Endothelial cell of umbilical vein (primary cell): ENCODE measurements at regions of chr6 and their contacts with region 1.

Region 1: GRCh38 chr6:152267967-152268845 is 369.0 kb downstream of the SYNE1 start:
- DNase-seq: peak; percentile 52
- H3K4me3 ChIP-seq: no peak overlapping the region
- H3K27ac ChIP-seq: no peak overlapping the region
- H3K4me1 ChIP-seq: no peaks in the 10 kb centered on the region
- H3K27me3 ChIP-seq: no peaks in the 10 kb centered on the region
- CTCF ChIP-seq: peak; percentile 25 to 26
- POLR2A ChIP-seq: no peak

Region 2: DNA sequence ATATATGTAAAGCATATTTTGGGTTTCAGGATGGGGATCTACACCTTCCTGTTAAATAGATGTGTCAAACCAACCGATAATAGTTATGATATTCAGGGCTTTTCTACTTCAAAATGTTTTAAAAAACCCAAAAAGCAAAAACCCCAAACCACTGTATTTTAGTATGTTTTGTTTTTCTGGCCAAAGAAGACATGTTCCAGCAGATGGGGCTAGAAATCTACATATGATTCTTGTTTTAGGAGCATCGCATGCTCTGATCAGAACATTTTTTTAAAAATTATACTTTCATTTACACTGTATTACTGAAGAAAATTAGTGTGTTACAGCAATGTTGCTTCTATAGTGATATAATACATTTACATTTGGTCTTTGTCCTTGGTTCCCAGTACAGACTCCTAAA is 827.3 kb before region 1 on chr6:
- CTCF ChIA-PET with region 1: interaction called, 11 read pairs
- POLR2A ChIA-PET with region 1: no interaction called
- dilution Hi-C with region 1: no loop called
- intact Hi-C with region 1: no loop called
- DNase-seq: peak; percentile 30
- H3K4me3 ChIP-seq: no peak overlapping the region
- H3K27ac ChIP-seq: no peak overlapping the region
- H3K4me1 ChIP-seq: peaks cover 18% of the 10 kb centered on the region
- H3K27me3 ChIP-seq: no peaks in the 10 kb centered on the region
- CTCF ChIP-seq: peak in 1 of 2 donors; percentile 5
- POLR2A ChIP-seq: no peak

Region 3: DNA sequence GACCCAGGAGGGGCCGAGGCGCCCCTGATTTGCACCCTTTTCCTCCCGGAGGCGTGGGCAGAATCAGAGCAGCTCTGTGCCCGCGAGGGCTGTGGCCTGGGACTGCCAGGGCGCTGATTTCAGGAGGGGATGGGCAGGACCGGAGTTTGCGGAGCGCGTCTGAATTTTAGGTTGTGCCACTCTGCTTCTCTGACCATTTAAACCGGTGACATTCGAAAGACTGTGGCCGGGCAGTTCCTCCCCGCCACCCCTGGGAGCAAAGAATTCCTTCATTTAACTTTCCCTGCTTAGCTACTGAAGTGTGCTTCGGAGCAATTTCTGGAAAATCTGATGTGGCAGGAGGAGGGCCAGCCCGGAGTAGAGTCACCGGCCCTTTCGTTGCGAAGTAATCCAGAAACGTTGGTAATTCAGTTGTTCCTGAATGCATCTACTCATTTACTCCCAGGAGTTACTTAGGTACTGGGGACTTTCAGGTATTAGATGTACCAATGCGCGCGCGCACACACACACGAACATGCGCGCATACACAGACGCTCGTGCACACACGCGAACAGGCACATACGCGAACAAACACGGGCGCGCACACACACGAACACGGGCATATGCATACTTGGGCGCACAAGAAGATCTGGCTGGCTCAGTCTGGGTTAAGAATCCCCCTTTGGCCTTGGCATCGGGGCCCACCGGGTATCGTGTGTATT is 773.8 kb before region 1 on chr6:
- CTCF ChIA-PET with region 1: no interaction called
- POLR2A ChIA-PET with region 1: no interaction called
- dilution Hi-C with region 1: no loop called
- intact Hi-C with region 1: loop called (anchors 5 kb)
- DNase-seq: peak; percentile 70
- H3K4me3 ChIP-seq: peak overlapping the region; percentile 51 to 82 (median 64)
- H3K27ac ChIP-seq: peak overlapping the region; percentile 14
- H3K4me1 ChIP-seq: peaks cover 12% of the 10 kb centered on the region
- H3K27me3 ChIP-seq: no peaks in the 10 kb centered on the region
- CTCF ChIP-seq: no peak
- POLR2A ChIP-seq: no peak

Region 4: GRCh38 chr6:151661928-151662327 is 606.3 kb before region 1 on chr6:
- CTCF ChIA-PET with region 1: interaction called, 16 read pairs
- POLR2A ChIA-PET with region 1: no interaction called
- dilution Hi-C with region 1: no loop called
- intact Hi-C with region 1: loop called (anchors 5 kb)
- DNase-seq: peak; percentile 9
- H3K4me3 ChIP-seq: no peak overlapping the region
- H3K27ac ChIP-seq: no peak overlapping the region
- H3K4me1 ChIP-seq: no peaks in the 10 kb centered on the region
- H3K27me3 ChIP-seq: peaks cover 7 to 21% of the 10 kb centered on the region in 2 experiments
- CTCF ChIP-seq: peak; percentile 23 to 52
- POLR2A ChIP-seq: no peak

Region 5: GRCh38 chr6:152124429-152125074 is 143.7 kb before region 1 on chr6:
- CTCF ChIA-PET with region 1: interaction called, 10 read pairs
- POLR2A ChIA-PET with region 1: no interaction called
- dilution Hi-C with region 1: no loop called
- intact Hi-C with region 1: loop called (anchors 5 kb)
- DNase-seq: peak; percentile 81
- H3K4me3 ChIP-seq: no peak overlapping the region
- H3K27ac ChIP-seq: no peak overlapping the region
- H3K4me1 ChIP-seq: peaks cover 1% of the 10 kb centered on the region
- H3K27me3 ChIP-seq: no peaks in the 10 kb centered on the region
- CTCF ChIP-seq: peak; percentile 53 to 55
- POLR2A ChIP-seq: no peak

Region 6: GRCh38 chr6:152356451-152357061 is 88.3 kb after region 1 on chr6:
- CTCF ChIA-PET with region 1: interaction called, 12 read pairs
- POLR2A ChIA-PET with region 1: no interaction called
- dilution Hi-C with region 1: no loop called
- intact Hi-C with region 1: no loop called
- DNase-seq: peak; percentile 54
- H3K4me3 ChIP-seq: no peak overlapping the region
- H3K27ac ChIP-seq: no peak overlapping the region
- H3K4me1 ChIP-seq: no peaks in the 10 kb centered on the region
- H3K27me3 ChIP-seq: no peaks in the 10 kb centered on the region
- CTCF ChIP-seq: peak in 1 of 2 donors; percentile 29
- POLR2A ChIP-seq: no peak

Region 7: DNA sequence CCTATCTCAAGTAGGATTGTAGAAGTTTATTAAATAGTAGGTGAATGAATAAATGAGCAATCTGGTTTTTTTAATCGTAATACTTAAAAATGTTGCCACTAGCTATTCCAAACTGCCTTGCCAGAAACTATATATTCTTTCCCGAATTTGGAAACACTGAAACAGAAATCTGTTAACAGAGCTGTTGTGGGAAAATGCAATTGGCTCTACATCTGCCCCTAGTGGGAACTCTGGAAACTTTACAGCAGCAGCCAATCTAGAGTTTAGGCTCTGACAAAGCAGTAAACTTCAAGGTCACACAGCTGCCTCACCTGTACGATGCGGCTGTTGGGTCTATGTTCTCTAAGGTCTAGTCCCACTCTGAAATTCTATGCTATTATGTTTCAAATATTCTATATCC is 327.3 kb after region 1 on chr6:
- CTCF ChIA-PET with region 1: no interaction called
- POLR2A ChIA-PET with region 1: no interaction called
- dilution Hi-C with region 1: no loop called
- intact Hi-C with region 1: no loop called
- DNase-seq: peak; percentile 25
- H3K4me3 ChIP-seq: no peak overlapping the region
- H3K27ac ChIP-seq: no peak overlapping the region
- H3K4me1 ChIP-seq: no peaks in the 10 kb centered on the region
- H3K27me3 ChIP-seq: no peaks in the 10 kb centered on the region
- CTCF ChIP-seq: peak in 1 of 2 donors; percentile 62
- POLR2A ChIP-seq: no peak